ENCODE measurements at regions of chr5 and their contacts with region 1.

Region 1: GRCh38 chr5:141564216-141564692 is 54.5 kb downstream of the DIAPH1 start:
- DNase-seq: peak; percentile 59
- H3K4me3 ChIP-seq: peak overlapping the region in 1 of 2 experiments; percentile 31; a peak in 1 of 4 replicates
- H3K27ac ChIP-seq: peak overlapping the region; percentile 77 to 82
- H3K4me1 ChIP-seq: peaks cover 11 to 15% of the 10 kb centered on the region in 2 experiments; a peak in 3 of 4 replicates
- H3K27me3 ChIP-seq: no peaks in the 10 kb centered on the region
- CTCF ChIP-seq: peak; percentile 99
- EP300 ChIP-seq: peak in 1 of 2 experiments; percentile 43; a peak in 2 of 4 replicates
- RAD21 ChIP-seq: peak; percentile 83

Region 2: DNA sequence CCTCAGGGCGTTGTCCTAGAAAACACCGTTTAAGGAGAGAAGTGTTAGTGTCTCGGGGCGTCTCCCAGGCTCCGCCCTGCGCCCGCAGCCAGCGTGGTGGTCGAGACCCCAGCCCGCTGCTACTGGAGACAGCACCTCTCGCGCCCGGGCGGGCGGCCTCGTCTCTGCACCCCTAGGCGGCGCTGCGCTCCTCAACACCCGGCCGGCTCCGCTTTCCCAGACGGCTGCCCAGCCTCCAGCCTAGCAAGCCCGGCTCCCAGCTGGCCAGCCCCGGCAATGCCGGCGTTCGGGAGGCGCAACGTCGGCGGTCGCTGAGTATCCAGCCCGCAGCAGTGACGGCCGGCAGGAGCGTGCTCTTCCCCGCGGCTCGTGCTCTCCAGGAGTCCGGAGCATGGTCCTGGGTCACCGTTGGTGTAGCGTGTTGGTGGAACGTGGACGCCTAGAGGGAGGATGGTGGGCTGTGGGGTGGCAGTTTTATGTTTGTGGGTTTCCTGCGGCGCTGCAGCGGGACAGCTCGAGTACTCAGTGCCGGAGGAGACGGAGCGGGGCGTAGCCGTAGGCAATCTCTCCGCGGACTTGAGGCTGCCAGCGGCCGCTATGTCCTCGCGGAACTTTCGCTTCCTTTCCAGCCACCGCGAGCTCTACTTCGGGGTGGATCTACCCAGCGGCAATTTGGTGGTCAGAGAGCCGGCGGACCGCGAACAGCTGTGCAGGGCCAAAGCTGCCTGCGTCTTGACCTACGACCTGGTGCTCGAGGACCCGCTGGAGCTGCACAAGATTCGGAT is 637.6 kb before region 1 on chr5:
- CTCF ChIA-PET with region 1: no interaction called
- POLR2A ChIA-PET with region 1: no interaction called
- DNase-seq: peak; percentile 95
- H3K4me3 ChIP-seq: peak overlapping the region; percentile 54 to 62
- H3K27ac ChIP-seq: peak overlapping the region in 1 of 2 experiments; percentile 79; a peak in 2 of 4 replicates
- H3K4me1 ChIP-seq: peaks cover 0 to 7% of the 10 kb centered on the region in 2 experiments; a peak in 2 of 4 replicates
- H3K27me3 ChIP-seq: no peaks in the 10 kb centered on the region
- CTCF ChIP-seq: peak; percentile 70
- EP300 ChIP-seq: no peak
- RAD21 ChIP-seq: peak; percentile 79

Region 3: DNA sequence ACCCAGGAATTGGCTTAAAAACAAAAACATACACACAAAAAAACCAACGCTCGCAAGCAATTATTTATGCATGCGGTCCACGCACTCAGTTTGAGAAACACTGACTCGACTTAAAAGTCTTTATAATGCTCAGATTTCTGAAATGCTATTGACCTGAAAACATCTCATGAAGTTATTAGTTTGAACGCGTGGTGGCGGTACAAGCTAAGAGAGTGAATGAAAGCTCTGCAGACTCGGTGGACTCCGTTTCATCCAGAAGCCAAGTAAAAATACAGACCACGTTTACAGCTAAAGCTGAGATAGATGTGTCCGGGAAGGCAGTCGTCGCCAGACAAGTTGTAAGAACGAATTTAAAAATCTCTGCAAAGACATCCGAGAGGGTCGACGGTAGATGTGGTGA is 414.4 kb before region 1 on chr5 and contains the start of gene PCDHB6:
- CTCF ChIA-PET with region 1: interaction called, 15 read pairs
- POLR2A ChIA-PET with region 1: interaction called, 5 read pairs
- DNase-seq: peak; percentile 76
- H3K4me3 ChIP-seq: peak within 1 kb of the TSS; percentile 54 to 65
- H3K27ac ChIP-seq: peak within 1 kb of the TSS in 1 of 2 experiments; percentile 53; a peak in 1 of 4 replicates
- H3K4me1 ChIP-seq: no peaks in the 10 kb centered on the region
- H3K27me3 ChIP-seq: no peaks in the 10 kb centered on the region
- CTCF ChIP-seq: peak; percentile 56
- EP300 ChIP-seq: no peak
- RAD21 ChIP-seq: peak; percentile 73
- polyA plus RNA-seq, gene PCDHB6: 3.9 and 5.0 TPM in 2 replicates

Region 4: GRCh38 chr5:141223112-141223783 is 341.0 kb before region 1 on chr5 and contains the start of gene PCDHB14:
- CTCF ChIA-PET with region 1: interaction called, 43 read pairs
- POLR2A ChIA-PET with region 1: interaction called, 19 read pairs
- DNase-seq: peak; percentile 78
- H3K4me3 ChIP-seq: peak within 1 kb of the TSS; percentile 59 to 80
- H3K27ac ChIP-seq: peak within 1 kb of the TSS; percentile 29 to 74; a peak in 2 of 4 replicates
- H3K4me1 ChIP-seq: peaks cover 0 to 2% of the 10 kb centered on the region in 2 experiments; a peak in 2 of 4 replicates
- H3K27me3 ChIP-seq: no peaks in the 10 kb centered on the region
- CTCF ChIP-seq: peak; percentile 65
- EP300 ChIP-seq: no peak
- RAD21 ChIP-seq: peak; percentile 81
- polyA plus RNA-seq, gene PCDHB14: 9.7 and 10.6 TPM in 2 replicates

Region 5: GRCh38 chr5:141326088-141326854 is 238.0 kb before region 1 on chr5:
- CTCF ChIA-PET with region 1: interaction called, 36 read pairs
- POLR2A ChIA-PET with region 1: no interaction called
- DNase-seq: peak; percentile 74
- H3K4me3 ChIP-seq: peak overlapping the region; percentile 46 to 58
- H3K27ac ChIP-seq: peak overlapping the region; percentile 16 to 67; a peak in 3 of 4 replicates
- H3K4me1 ChIP-seq: no peaks in the 10 kb centered on the region; a peak in 1 of 4 replicates
- H3K27me3 ChIP-seq: no peaks in the 10 kb centered on the region
- CTCF ChIP-seq: peak; percentile 56
- EP300 ChIP-seq: no peak
- RAD21 ChIP-seq: peak; percentile 65

Region 6: DNA sequence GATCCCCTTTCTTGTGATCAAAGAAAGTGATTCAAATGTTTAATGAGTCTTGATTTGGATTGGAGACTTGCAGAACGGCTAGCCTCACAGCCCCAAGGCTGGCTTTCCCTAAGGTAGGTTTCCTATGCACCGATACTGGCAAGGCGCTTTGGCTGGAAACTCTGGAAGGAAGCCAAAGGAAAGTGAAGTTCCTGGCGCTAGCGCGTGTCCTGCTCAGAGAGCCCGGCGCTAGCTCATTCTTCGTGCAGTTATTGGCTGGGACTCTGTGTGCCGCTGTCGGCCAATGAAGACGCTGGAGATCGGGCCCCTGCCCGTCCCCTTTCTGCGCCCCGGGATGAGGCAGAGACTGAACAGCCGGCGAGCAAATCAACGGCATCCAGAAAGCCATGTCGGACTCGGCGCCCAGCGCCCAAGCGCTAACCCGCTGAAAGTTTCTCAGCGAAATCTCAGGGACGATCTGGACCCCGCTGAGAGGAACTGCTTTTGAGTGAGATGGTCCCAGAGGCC is 88.6 kb before region 1 on chr5 and contains the start of gene PCDHGC3:
- CTCF ChIA-PET with region 1: interaction called, 80 read pairs
- POLR2A ChIA-PET with region 1: no interaction called
- DNase-seq: peak; percentile 90
- H3K4me3 ChIP-seq: peak within 1 kb of the TSS; percentile 82 to 85
- H3K27ac ChIP-seq: peak within 1 kb of the TSS; percentile 92 to 94
- H3K4me1 ChIP-seq: peaks cover 6 to 34% of the 10 kb centered on the region in 2 experiments; a peak in 3 of 4 replicates
- H3K27me3 ChIP-seq: no peaks in the 10 kb centered on the region
- CTCF ChIP-seq: peak; percentile 45
- EP300 ChIP-seq: peak in 1 of 2 experiments; percentile 38; a peak in 1 of 4 replicates
- RAD21 ChIP-seq: peak; percentile 85
- polyA plus RNA-seq, gene PCDHGC3: 55.8 and 97.0 TPM in 2 replicates

Region 7: DNA sequence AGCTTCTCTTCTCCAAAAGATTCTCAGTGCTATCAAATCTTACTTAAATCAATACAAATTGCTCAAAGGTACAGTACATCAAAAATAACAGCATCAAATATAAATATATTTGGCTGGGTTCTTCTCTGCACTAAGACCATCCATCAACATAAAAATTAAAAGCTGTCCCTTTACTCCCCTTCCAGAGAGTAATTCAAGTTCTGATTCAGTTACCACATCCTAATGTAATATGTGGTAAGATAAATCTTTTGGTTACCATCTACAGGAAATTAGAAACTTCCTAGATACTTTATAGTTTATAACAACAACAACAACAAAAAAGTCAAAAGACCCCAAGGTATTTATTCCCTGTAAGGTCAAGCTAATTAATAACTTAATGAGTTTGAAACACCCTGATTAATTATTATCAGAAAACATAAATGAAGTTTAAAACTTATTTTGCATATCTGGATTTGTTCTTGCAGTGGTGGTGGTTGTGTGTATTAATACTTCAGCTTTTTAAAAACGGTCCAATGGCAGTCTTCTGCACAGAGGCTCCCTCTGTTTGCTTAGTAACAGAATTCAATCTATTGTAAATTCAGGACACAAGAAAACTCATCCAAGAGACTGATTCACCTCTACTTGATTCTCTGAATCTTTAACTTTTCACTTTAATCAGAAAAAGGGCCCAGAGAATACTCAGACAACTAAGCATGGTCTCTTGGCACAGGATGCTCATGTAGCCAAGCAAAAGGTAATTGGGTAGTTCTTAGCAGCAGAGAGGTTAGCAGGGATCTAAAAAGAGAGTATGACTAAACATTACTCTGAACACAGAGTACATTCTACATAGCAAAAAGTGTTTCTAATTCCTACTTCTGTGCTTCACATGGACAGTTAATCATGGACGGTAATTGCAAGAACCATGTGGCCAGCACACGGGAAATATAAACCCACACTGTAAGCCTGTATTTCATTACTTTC is 34.4 kb after region 1 on chr5:
- CTCF ChIA-PET with region 1: interaction called, 11 read pairs
- POLR2A ChIA-PET with region 1: no interaction called
- DNase-seq: no peak
- H3K4me3 ChIP-seq: no peak overlapping the region
- H3K27ac ChIP-seq: peak overlapping the region in 1 of 2 experiments; percentile 9; a peak in 1 of 4 replicates
- H3K4me1 ChIP-seq: peaks cover 0 to 5% of the 10 kb centered on the region in 2 experiments; a peak in 1 of 4 replicates
- H3K27me3 ChIP-seq: no peaks in the 10 kb centered on the region
- CTCF ChIP-seq: no peak
- EP300 ChIP-seq: no peak
- RAD21 ChIP-seq: no peak

Region 8: DNA sequence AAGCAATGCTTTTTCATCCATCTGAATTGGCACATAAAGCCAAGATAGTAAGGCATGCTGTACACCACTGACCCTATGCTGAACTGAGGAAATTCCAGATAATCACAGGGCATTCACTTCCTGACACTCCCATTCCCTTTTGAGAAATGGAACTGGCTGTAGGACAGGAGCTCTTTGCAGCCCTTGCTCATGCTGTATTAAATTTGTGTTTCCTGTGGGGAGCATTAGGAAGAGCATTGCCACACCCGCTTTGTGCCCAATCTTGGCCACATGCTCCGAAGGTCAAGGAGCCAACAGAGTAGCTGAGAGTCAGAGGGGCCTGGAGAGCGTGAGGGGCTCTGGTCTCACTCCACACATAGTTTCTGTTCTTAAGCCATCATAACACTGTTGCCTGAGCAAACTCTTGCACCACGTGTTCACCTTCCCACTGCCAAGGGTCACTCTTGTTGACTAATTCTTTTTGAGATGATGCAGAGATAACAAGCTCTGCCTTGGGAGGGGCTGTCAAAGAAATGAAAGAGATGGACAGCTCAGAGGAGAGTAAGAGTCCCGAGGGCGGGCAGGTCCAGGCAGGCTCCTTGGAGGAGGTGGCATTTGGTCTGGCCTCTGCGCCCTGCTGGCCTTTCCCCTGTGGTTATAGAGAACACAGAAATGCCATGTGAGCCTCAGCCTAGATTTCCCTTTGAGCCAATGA is 149.5 kb after region 1 on chr5:
- CTCF ChIA-PET with region 1: no interaction called
- POLR2A ChIA-PET with region 1: no interaction called
- DNase-seq: no peak
- H3K4me3 ChIP-seq: no peak overlapping the region
- H3K27ac ChIP-seq: no peak overlapping the region
- H3K4me1 ChIP-seq: peaks cover 0 to 15% of the 10 kb centered on the region in 2 experiments; a peak in 1 of 4 replicates
- H3K27me3 ChIP-seq: no peaks in the 10 kb centered on the region; the same call in 1 of the 2 replicates
- CTCF ChIP-seq: no peak
- EP300 ChIP-seq: no peak
- RAD21 ChIP-seq: no peak